ENCODE measurements at regions of chr2 and their contacts with region 1.

Region 1: DNA sequence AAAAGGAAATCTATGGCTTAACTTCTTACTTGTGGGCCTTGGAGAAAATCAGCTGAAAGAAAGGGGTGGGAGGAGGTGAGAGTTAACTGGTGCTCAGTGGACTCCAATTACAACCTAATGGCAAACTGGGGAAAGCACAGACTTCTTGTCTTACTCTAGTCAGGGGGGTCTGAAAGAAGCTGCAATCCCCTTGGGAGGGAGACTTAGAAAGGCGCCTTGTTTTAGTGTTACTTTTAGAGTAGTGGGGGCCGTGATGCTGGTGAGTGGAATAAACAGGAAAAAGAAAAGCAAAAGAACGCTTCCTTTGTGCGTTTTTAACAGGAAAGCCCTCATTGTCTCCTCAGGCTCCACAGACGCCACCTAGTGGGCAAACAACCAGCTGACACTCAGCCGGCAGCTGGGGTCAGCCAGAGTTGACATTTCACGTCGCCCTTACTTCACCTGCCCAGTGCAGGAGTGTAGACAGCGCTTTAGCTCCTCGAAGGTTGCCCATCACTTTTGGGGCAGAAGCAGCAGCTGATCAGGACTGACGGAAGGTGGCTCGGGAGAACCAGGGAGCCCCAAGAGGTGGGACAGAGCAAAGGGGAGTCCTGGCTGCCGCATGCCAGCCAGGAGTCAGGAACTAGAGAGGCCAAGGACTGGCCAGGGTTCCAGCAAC is 55.9 kb upstream of the GORASP2 start:
- DNase-seq: peak; percentile 44 to 90
- H3K4me3 ChIP-seq: peak overlapping the region in 1 of 4 experiments; percentile 43; a peak in 1 of 8 replicates
- H3K27ac ChIP-seq: no peak overlapping the region
- H3K4me1 ChIP-seq: peaks cover 0 to 3% (median 0%) of the 10 kb centered on the region in 4 experiments; a peak in 1 of 7 replicates
- H3K27me3 ChIP-seq: no peaks in the 10 kb centered on the region
- CTCF ChIP-seq: peak; percentile 82 to 97 (median 92)
- EP300 ChIP-seq: no peak
- POLR2A ChIP-seq: no peak
- RAD21 ChIP-seq: peak; percentile 61 to 72

Region 2: GRCh38 chr2:170806548-170806947 is 66.6 kb before region 1 on chr2:
- CTCF ChIA-PET with region 1: no interaction called
- POLR2A ChIA-PET with region 1: no interaction called
- DNase-seq: no peak
- H3K4me3 ChIP-seq: no peak overlapping the region
- H3K27ac ChIP-seq: no peak overlapping the region
- H3K4me1 ChIP-seq: no peaks in the 10 kb centered on the region
- H3K27me3 ChIP-seq: 0 out of 7 replicates have a peak, but pooled peaks cover 0 to 2% (median 0%) of the 10 kb centered on the region in 4 experiments
- CTCF ChIP-seq: no peak
- EP300 ChIP-seq: no peak
- POLR2A ChIP-seq: no peak
- RAD21 ChIP-seq: no peak

Region 3: DNA sequence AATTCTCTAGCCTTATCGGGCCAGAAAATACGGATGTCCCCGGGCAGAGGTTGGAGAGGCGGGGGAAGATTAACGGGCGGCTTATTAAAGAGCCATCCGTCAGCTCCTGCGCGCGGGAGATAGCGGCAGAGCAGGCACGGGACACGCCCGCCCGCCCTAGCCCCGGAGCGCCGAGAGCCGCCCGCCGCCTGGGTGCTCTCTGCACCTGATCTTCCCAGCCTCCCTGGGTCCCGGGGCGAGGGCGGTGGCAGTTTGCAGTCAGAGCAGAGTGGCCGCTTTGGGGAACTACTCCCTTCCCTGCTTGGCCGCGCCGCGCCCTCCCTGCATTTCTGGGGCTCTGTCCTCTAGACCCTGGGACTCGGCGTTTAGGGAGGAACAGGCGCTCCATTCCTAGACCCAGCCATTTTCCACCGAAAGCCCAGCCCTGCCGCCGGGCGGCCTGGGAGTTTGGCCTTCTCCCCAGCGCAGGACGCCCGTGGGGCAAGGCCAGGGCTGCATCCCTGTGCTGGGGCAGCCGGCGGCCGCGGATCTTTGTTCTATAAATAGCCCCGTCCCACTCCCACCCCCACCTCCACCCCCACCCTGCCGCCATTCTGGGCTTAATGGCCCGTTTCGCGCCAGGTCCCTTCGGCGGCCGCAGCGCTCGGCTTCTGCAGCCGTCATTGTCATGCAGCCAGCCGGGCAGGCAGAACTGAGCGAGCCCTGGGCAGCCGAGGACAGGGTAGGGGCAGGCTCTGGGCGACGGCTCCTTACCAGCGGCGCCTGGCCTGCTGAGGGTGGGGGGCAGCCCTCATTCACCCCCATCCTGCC is 49.9 kb before region 1 on chr2:
- CTCF ChIA-PET with region 1: interaction called, 12 read pairs
- POLR2A ChIA-PET with region 1: no interaction called
- DNase-seq: peak in 1 of 2 experiments; percentile 77
- H3K4me3 ChIP-seq: peak overlapping the region; percentile 16 to 64 (median 59)
- H3K27ac ChIP-seq: no peak overlapping the region
- H3K4me1 ChIP-seq: peaks cover 8 to 44% (median 28%) of the 10 kb centered on the region in 4 experiments
- H3K27me3 ChIP-seq: peaks cover 53 to 91% (median 83%) of the 10 kb centered on the region in 4 experiments
- CTCF ChIP-seq: no peak
- EP300 ChIP-seq: no peak
- POLR2A ChIP-seq: no peak
- RAD21 ChIP-seq: no peak

Region 4: GRCh38 chr2:170843656-170844055 is 29.5 kb before region 1 on chr2:
- CTCF ChIA-PET with region 1: interaction called, 94 read pairs
- POLR2A ChIA-PET with region 1: no interaction called
- DNase-seq: no peak
- H3K4me3 ChIP-seq: no peak overlapping the region
- H3K27ac ChIP-seq: no peak overlapping the region
- H3K4me1 ChIP-seq: no peaks in the 10 kb centered on the region
- H3K27me3 ChIP-seq: peaks cover 0 to 2% (median 0%) of the 10 kb centered on the region in 4 experiments; a peak in 1 of 7 replicates
- CTCF ChIP-seq: no peak
- EP300 ChIP-seq: no peak
- POLR2A ChIP-seq: no peak
- RAD21 ChIP-seq: no peak

Region 5: DNA sequence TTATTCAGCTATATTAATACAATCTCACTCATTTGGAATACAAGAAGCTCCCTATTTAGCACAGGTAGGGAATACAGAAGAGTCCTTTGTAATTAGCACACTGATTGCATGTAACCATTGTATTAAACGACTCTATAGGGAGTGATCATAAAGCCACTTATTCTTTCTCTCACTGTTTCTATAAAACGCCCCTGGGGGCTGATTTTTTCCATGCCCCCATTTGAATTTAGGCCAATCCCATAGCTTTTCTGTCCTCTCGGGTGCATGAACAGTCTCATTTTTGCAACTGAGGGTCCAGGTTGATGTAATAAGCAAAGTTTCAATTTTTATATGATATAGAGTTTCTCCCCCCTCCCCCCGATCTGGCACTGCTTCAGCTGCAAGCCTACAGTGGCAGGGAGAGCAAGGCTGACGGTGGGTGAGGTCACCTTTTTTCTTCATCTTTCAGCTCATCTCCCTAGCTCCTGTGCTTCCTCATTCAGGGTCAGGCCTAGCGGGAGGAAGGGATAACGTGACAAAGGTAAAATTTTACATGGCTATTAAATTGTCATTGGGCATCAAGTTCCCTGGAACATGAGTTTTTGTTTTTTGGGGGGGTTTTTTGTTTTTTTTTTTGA is 10.8 kb before region 1 on chr2:
- CTCF ChIA-PET with region 1: interaction called, 42 read pairs
- POLR2A ChIA-PET with region 1: no interaction called
- DNase-seq: no peak
- H3K4me3 ChIP-seq: no peak overlapping the region
- H3K27ac ChIP-seq: no peak overlapping the region
- H3K4me1 ChIP-seq: no peaks in the 10 kb centered on the region
- H3K27me3 ChIP-seq: no peaks in the 10 kb centered on the region
- CTCF ChIP-seq: no peak
- EP300 ChIP-seq: no peak
- POLR2A ChIP-seq: no peak
- RAD21 ChIP-seq: no peak

Region 6: DNA sequence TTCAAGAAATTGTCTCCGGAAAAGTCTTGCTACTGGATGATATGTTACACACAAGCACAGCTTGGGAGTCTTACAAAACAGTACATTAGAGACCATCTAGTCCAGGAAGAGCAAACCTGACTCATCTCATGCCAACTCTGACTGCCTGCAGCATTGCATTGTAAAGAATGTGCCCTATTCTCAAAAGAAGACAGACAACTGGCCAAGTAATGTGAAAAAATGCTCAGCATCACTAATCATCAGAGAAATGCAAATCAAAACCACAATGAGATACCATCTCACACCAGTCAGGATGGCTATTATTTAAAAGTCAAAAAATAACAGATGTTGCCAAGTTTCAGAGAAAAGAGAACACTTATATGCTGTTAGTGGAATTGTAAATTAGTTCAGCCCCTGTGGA is 13.2 kb after region 1 on chr2:
- CTCF ChIA-PET with region 1: interaction called, 54 read pairs
- POLR2A ChIA-PET with region 1: no interaction called
- DNase-seq: no peak
- H3K4me3 ChIP-seq: no peak overlapping the region
- H3K27ac ChIP-seq: no peak overlapping the region
- H3K4me1 ChIP-seq: peaks cover 0 to 4% (median under 1%) of the 10 kb centered on the region in 4 experiments; a peak in 2 of 7 replicates
- H3K27me3 ChIP-seq: no peaks in the 10 kb centered on the region
- CTCF ChIP-seq: no peak
- EP300 ChIP-seq: no peak
- POLR2A ChIP-seq: no peak
- RAD21 ChIP-seq: no peak

Region 7: DNA sequence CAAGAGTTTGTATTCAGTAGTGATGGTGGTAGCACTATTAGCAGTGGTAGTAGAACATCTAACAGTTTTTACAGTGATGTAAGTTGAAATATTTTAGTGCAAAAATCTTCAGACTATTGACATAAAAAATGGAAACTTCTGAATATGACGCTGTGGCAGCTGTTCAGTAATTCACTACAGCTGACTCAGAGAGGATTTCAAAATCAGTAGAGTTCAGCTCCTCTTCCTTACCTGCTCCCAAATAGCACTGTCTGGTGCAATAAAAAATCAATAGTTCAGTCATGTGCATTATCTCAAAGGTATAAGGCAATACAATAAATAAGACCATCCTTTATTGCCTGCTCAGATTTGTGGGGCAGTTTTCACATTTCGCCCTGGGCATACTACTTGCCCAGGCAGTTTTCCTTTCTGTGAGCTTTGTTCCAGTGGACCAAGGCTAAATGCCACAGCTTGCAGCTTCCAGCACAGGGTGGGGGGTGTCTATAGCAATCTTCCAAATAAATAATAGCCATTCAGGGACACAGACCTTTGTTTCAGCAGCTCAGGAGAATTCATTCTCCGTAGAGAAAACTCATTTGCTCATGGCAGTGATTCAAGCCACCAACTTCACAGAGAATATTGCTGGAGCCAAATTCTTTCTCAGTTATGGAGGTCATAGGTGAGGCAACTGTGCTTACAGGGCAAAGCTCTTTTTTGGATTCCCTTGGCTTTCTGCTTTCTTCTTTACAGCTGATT is 22.0 kb after region 1 on chr2:
- CTCF ChIA-PET with region 1: interaction called, 14 read pairs
- POLR2A ChIA-PET with region 1: no interaction called
- DNase-seq: no peak
- H3K4me3 ChIP-seq: no peak overlapping the region
- H3K27ac ChIP-seq: no peak overlapping the region
- H3K4me1 ChIP-seq: peaks cover 0 to 5% (median under 1%) of the 10 kb centered on the region in 4 experiments; a peak in 2 of 7 replicates
- H3K27me3 ChIP-seq: no peaks in the 10 kb centered on the region
- CTCF ChIP-seq: no peak
- EP300 ChIP-seq: no peak
- POLR2A ChIP-seq: no peak
- RAD21 ChIP-seq: no peak